Brain microvascular endothelial cell (primary cell): ENCODE measurements at regions of chr2 and their contacts with region 1.

Region 1: GRCh38 chr2:65264821-65265670 is 37.4 kb downstream of the ACTR2 start:
- DNase-seq: peak; percentile 69
- H3K4me3 ChIP-seq: no peak overlapping the region
- H3K27ac ChIP-seq: no peak overlapping the region
- H3K27me3 ChIP-seq: no peaks in the 10 kb centered on the region
- CTCF ChIP-seq: peak; percentile 65

Region 2: DNA sequence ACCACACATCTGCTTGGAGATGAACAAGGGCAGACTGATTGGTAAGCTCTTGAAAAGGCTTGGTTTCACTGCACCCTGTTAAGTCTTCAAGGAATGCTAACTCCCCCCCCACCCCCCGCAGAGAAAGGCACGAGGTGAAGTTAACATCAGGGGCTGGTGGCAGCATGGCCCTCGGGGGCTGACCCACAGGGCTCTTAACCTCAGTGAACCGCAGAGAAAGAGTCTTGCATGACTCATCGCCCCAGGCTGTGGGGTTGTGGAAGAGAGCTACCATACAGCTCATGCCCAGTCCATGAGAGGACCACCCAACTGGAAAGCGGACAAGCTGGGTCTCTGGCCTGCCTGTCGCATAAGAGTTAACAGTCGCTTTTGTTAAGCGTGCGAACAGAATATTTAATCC is 219.4 kb before region 1 on chr2:
- in situ Hi-C with region 1: no loop called
- DNase-seq: peak; percentile 41
- H3K4me3 ChIP-seq: no peak overlapping the region
- H3K27ac ChIP-seq: no peak overlapping the region
- H3K27me3 ChIP-seq: no peaks in the 10 kb centered on the region
- CTCF ChIP-seq: no peak

Region 3: GRCh38 chr2:65545837-65546805 is 281.1 kb after region 1 on chr2:
- in situ Hi-C with region 1: loop called (anchors 25 kb)
- DNase-seq: no peak
- H3K4me3 ChIP-seq: no peak overlapping the region
- H3K27ac ChIP-seq: no peak overlapping the region
- H3K27me3 ChIP-seq: no peaks in the 10 kb centered on the region
- CTCF ChIP-seq: no peak